ENCODE measurements at regions of chr21 and their contacts with region 1.

Region 1: GRCh38 chr21:35840197-35840799 is 220.0 kb downstream of the SETD4 start:
- DNase-seq: peak; percentile 73
- H3K4me3 Mint-ChIP-seq: no peak overlapping the region
- H3K27ac Mint-ChIP-seq: no peak overlapping the region
- H3K4me1 Mint-ChIP-seq: no peaks in the 10 kb centered on the region
- H3K27me3 Mint-ChIP-seq: peaks cover 2% of the 10 kb centered on the region

Region 2: GRCh38 chr21:34745557-34746255 is 1094.6 kb before region 1 on chr21:
- CTCF ChIA-PET with region 1: interaction called, 12 read pairs
- POLR2A ChIA-PET with region 1: no interaction called
- DNase-seq: peak; percentile 62
- H3K4me3 Mint-ChIP-seq: peak overlapping the region; percentile 52
- H3K27ac Mint-ChIP-seq: peak overlapping the region; percentile 66
- H3K4me1 Mint-ChIP-seq: peaks cover 4% of the 10 kb centered on the region
- H3K27me3 Mint-ChIP-seq: peaks cover 16% of the 10 kb centered on the region

Region 3: GRCh38 chr21:35855484-35855883 is 15.2 kb after region 1 on chr21:
- CTCF ChIA-PET with region 1: no interaction called
- POLR2A ChIA-PET with region 1: no interaction called
- DNase-seq: no peak
- H3K4me3 Mint-ChIP-seq: no peak overlapping the region
- H3K27ac Mint-ChIP-seq: no peak overlapping the region
- H3K4me1 Mint-ChIP-seq: no peaks in the 10 kb centered on the region
- H3K27me3 Mint-ChIP-seq: peaks cover 12% of the 10 kb centered on the region